AG04450 (cell line): ENCODE measurements at regions of chr10 and their contacts with region 1.

Region 1: GRCh38 chr10:3785257-3785850 is 345 bp upstream of the KLF6 start:
- DNase-seq: peak; percentile 95
- H3K4me3 ChIP-seq: peak overlapping the region; percentile 88
- H3K27ac ChIP-seq: peak overlapping the region; percentile 99
- H3K27me3 ChIP-seq: no peaks in the 10 kb centered on the region
- CTCF ChIP-seq: no peak

Region 2: GRCh38 chr10:3467052-3467951 is 318.1 kb before region 1 on chr10:
- CTCF ChIA-PET with region 1: no interaction called
- POLR2A ChIA-PET with region 1: interaction called, 10 read pairs
- DNase-seq: peak; percentile 91
- H3K4me3 ChIP-seq: no peak overlapping the region
- H3K27ac ChIP-seq: peak overlapping the region; percentile 98
- H3K27me3 ChIP-seq: no peaks in the 10 kb centered on the region
- CTCF ChIP-seq: no peak

Region 3: GRCh38 chr10:3747984-3748383 is 37.4 kb before region 1 on chr10:
- CTCF ChIA-PET with region 1: no interaction called
- POLR2A ChIA-PET with region 1: no interaction called
- DNase-seq: no peak
- H3K4me3 ChIP-seq: no peak overlapping the region
- H3K27ac ChIP-seq: no peak overlapping the region
- H3K27me3 ChIP-seq: no peaks in the 10 kb centered on the region
- CTCF ChIP-seq: no peak

Region 4: GRCh38 chr10:3805791-3806461 is 20.6 kb after region 1 on chr10:
- CTCF ChIA-PET with region 1: interaction called, 5 read pairs
- POLR2A ChIA-PET with region 1: interaction called, 30 read pairs
- DNase-seq: no peak
- H3K4me3 ChIP-seq: no peak overlapping the region
- H3K27ac ChIP-seq: peak overlapping the region; percentile 79
- H3K27me3 ChIP-seq: no peaks in the 10 kb centered on the region
- CTCF ChIP-seq: no peak

Region 5: GRCh38 chr10:3828404-3829155 is 43.2 kb after region 1 on chr10:
- CTCF ChIA-PET with region 1: no interaction called
- POLR2A ChIA-PET with region 1: interaction called, 32 read pairs
- DNase-seq: peak; percentile 61
- H3K4me3 ChIP-seq: peak overlapping the region; percentile 41
- H3K27ac ChIP-seq: peak overlapping the region; percentile 73
- H3K27me3 ChIP-seq: no peaks in the 10 kb centered on the region
- CTCF ChIP-seq: no peak

Region 6: GRCh38 chr10:3887885-3888476 is 102.6 kb after region 1 on chr10:
- CTCF ChIA-PET with region 1: no interaction called
- POLR2A ChIA-PET with region 1: interaction called, 13 read pairs
- DNase-seq: peak; percentile 57
- H3K4me3 ChIP-seq: no peak overlapping the region
- H3K27ac ChIP-seq: peak overlapping the region; percentile 81
- H3K27me3 ChIP-seq: no peaks in the 10 kb centered on the region
- CTCF ChIP-seq: no peak

Region 7: DNA sequence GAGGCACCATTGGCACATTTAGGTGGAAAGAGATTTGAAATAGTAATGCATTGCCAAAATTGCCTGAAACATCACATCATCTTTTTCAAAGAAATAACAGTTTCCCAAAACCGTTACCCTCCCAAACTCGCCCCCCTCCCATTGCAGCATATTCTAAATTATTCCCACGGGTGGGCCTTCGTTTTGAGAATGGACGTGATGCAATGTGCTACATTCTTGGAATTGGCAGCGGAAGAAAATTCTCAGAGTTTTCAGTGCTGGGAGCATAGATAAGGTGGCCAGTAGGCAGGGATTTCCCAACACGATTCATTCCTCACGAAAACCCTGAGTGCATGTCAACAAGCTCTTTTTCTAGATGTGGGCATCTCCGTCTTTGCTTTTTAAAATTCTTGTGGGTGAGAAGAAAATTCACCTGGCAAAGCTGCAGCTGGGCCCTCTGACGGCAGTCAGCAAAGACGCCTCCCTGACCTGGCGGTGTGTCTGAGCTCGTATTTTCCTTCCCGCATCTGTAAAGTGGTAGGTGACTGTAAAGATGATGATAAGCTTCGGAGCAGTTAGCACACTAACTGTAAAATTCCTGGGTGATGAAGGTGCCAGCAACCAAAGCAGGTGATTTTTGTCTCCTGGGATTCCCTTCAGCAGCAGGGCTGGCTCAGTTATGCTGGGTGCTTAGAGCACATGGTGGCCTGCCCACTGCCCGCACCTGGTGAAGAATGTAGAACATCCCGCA is 141.5 kb after region 1 on chr10:
- CTCF ChIA-PET with region 1: no interaction called
- POLR2A ChIA-PET with region 1: no interaction called
- DNase-seq: no peak
- H3K4me3 ChIP-seq: no peak overlapping the region
- H3K27ac ChIP-seq: no peak overlapping the region
- H3K27me3 ChIP-seq: no peaks in the 10 kb centered on the region
- CTCF ChIP-seq: no peak

Region 8: DNA sequence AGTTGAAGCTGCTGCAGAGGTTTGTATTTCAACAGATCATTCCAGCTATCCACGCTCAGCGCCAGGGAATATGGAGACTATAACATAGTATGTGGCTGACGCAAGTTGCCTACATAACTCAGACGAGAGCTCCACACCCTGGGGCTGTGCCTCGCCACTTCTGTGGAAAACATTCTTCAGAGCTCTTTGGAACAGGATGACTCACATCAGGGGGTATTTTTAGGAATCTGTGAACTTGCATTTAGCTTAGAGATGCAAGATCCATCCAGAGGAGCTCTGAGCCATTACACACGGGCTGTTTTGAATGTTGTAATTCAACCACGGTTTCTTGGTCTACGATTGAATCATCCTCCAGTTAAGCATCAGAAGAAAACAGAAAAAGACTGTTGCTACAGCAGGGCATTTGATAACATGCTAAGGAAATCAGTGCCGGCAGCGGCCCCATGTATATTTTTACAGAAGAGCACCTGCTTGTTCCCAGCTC is 559.2 kb after region 1 on chr10:
- CTCF ChIA-PET with region 1: no interaction called
- POLR2A ChIA-PET with region 1: interaction called, 21 read pairs
- DNase-seq: peak; percentile 98
- H3K4me3 ChIP-seq: no peak overlapping the region
- H3K27ac ChIP-seq: peak overlapping the region; percentile 96
- H3K27me3 ChIP-seq: no peaks in the 10 kb centered on the region
- CTCF ChIP-seq: peak; percentile 38; the same call in 1 of the 2 replicates

Region 9: GRCh38 chr10:4767033-4767814 is 981.9 kb after region 1 on chr10:
- CTCF ChIA-PET with region 1: interaction called, 3 read pairs
- POLR2A ChIA-PET with region 1: interaction called, 12 read pairs
- DNase-seq: no peak
- H3K4me3 ChIP-seq: no peak overlapping the region
- H3K27ac ChIP-seq: no peak overlapping the region
- H3K27me3 ChIP-seq: no peaks in the 10 kb centered on the region
- CTCF ChIP-seq: peak; percentile 68